K562 (cell line): ENCODE measurements at regions of chr17 and their contacts with region 1.

Region 1: GRCh38 chr17:82141705-82142104 is 43.7 kb upstream of the FASN start:
- DNase-seq: no peak
- ATAC-seq: no peak
- H3K4me3 ChIP-seq: no peak overlapping the region
- H3K27ac ChIP-seq: no peak overlapping the region
- H3K4me1 ChIP-seq: peaks cover 6 to 11% of the 10 kb centered on the region in 2 experiments; a peak in 4 of 5 replicates
- H3K27me3 ChIP-seq: no peaks in the 10 kb centered on the region
- CTCF ChIP-seq: no peak
- EP300 ChIP-seq: no peak
- POLR2A ChIP-seq: no peak
- RAD21 ChIP-seq: no peak

Region 2: GRCh38 chr17:82003411-82004381 is 138.0 kb before region 1 on chr17:
- CTCF ChIA-PET with region 1: interaction called, 11 read pairs
- POLR2A ChIA-PET with region 1: no interaction called
- in situ Hi-C with region 1: no loop called
- intact Hi-C with region 1: no loop called
- DNase-seq: no peak
- ATAC-seq: no peak
- H3K4me3 ChIP-seq: no peak overlapping the region
- H3K27ac ChIP-seq: no peak overlapping the region
- H3K4me1 ChIP-seq: peaks cover 0 to 76% of the 10 kb centered on the region in 2 experiments; a peak in 2 of 5 replicates
- H3K27me3 ChIP-seq: no peaks in the 10 kb centered on the region
- CTCF ChIP-seq: no peak
- EP300 ChIP-seq: no peak
- POLR2A ChIP-seq: no peak
- RAD21 ChIP-seq: no peak

Region 3: GRCh38 chr17:82105882-82106687 is 35.6 kb before region 1 on chr17:
- CTCF ChIA-PET with region 1: no interaction called
- POLR2A ChIA-PET with region 1: no interaction called
- in situ Hi-C with region 1: no loop called
- intact Hi-C with region 1: loop called (anchors 5 kb)
- DNase-seq: peak; percentile 48 to 67 (median 58)
- ATAC-seq: peak; percentile 79
- H3K4me3 ChIP-seq: no peak overlapping the region
- H3K27ac ChIP-seq: peak overlapping the region; percentile 44; the same call in 1 of the 3 replicates
- H3K4me1 ChIP-seq: peaks cover 22 to 74% of the 10 kb centered on the region in 2 experiments
- H3K27me3 ChIP-seq: no peaks in the 10 kb centered on the region
- CTCF ChIP-seq: peak; percentile 32 to 46 (median 45); a peak in 4 of 6 replicates
- EP300 ChIP-seq: no peak
- POLR2A ChIP-seq: no peak
- RAD21 ChIP-seq: peak; percentile 30 to 48; a peak in 2 of 4 replicates